ENCODE measurements at regions of chr7 and their contacts with region 1.

Region 1: DNA sequence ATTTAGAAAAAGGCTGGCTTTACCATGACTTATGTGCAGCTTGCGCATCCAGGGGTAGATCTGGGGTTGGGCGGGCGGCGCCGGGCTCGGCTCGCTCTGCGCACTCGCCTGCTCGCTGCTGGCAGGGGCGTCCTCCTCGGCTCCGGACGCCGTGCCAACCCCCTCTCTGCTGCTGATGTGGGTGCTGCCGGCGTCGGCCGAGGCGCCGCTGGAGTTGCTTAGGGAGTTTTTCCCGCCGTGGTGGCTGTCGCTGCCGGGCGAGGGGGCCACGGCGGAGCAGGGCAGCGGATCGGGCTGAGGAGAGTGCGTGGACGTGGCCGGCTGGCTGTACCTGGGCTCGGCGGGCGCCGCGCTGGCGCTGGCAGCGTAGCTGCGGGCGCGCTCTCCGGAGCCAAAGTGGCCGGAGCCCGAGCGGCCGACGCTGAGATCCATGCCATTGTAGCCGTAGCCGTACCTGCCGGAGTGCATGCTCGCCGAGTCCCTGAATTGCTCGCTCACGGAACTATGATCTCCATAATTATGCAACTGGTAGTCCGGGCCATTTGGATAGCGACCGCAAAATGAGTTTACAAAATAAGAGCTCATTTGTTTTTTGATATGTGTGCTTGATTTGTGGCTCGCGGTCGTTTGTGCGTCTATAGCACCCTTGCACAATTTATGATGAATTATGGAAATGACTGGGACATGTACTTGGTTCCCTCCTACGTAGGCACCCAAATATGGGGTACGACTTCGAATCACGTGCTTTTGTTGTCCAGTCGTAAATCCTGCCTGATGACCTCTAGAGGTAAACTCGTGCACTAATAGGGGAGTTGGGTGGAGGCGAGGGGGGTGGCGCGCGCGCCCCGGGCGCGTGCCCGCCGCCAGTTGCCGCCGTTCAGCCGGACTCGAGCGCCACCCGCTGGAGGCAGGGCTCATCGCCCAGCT is at the start of gene HOXA5:
- DNase-seq: peak; percentile 99
- H3K4me3 ChIP-seq: peak within 1 kb of the TSS; percentile 70 to 81 (median 74)
- H3K27ac ChIP-seq: peak within 1 kb of the TSS; percentile 89
- H3K4me1 ChIP-seq: peaks cover 60% of the 10 kb centered on the region
- H3K27me3 ChIP-seq: no peaks in the 10 kb centered on the region
- CTCF ChIP-seq: peak; percentile 75 to 91
- total RNA-seq, gene HOXA5: 9.1 to 11.0 TPM

Region 2: DNA sequence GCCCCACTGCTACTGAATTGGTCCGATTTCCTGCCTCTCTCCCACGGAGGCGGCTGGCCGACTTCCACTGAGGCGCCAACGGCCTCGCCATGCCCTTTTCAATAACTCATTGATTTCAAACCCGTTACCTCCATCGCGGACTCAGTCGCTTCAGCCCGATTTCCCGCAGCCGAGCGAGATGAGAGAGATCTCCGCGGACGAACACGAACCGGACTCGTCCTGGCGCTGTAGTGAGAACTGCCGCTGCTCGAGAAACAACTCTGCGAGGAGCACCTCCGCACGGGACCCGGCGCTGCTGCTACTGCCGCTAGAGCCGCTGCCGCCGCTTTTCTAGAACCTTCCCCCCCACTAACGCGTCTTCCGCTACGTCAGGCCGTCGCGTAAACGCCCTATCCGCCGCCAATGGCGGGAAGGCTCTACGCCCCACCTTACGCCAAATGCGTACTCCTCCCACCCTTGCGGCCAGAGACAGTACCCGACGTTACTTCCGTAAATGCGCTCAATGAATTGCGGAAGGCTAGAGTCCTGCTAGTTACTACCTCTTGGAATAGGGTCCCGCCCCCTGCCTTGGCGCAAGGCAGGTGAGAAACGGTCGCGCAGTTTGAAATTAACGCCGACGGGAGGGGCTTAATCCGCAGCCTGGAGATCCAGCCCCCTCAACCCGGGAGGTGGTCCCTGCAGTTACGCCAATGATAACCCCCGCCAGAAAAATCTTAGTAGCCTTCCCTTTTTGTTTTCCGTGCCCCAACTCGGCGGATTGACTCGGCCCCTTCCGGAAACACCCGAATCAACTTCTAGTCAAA is 942.6 kb before region 1 on chr7 and contains the start of gene HNRNPA2B1:
- CTCF ChIA-PET with region 1: no interaction called
- dilution Hi-C with region 1: no loop called
- in situ Hi-C with region 1: no loop called
- intact Hi-C with region 1: loop called (anchors 2 kb)
- DNase-seq: peak; percentile 97
- H3K4me3 ChIP-seq: peak within 1 kb of the TSS; percentile 99 to 100 (median 100)
- H3K27ac ChIP-seq: peak within 1 kb of the TSS; percentile 93
- H3K4me1 ChIP-seq: peaks cover 28% of the 10 kb centered on the region
- H3K27me3 ChIP-seq: no peaks in the 10 kb centered on the region
- CTCF ChIP-seq: no peak
- total RNA-seq, gene HNRNPA2B1: 62.0 to 506 TPM

Region 3: GRCh38 chr7:26500749-26501352 is 642.4 kb before region 1 on chr7:
- CTCF ChIA-PET with region 1: no interaction called
- dilution Hi-C with region 1: no loop called
- in situ Hi-C with region 1: no loop called
- intact Hi-C with region 1: loop called (anchors 5 kb)
- DNase-seq: peak; percentile 27
- H3K4me3 ChIP-seq: no peak overlapping the region
- H3K27ac ChIP-seq: no peak overlapping the region
- H3K4me1 ChIP-seq: no peaks in the 10 kb centered on the region
- H3K27me3 ChIP-seq: no peaks in the 10 kb centered on the region
- CTCF ChIP-seq: peak; percentile 37 to 65

Region 4: DNA sequence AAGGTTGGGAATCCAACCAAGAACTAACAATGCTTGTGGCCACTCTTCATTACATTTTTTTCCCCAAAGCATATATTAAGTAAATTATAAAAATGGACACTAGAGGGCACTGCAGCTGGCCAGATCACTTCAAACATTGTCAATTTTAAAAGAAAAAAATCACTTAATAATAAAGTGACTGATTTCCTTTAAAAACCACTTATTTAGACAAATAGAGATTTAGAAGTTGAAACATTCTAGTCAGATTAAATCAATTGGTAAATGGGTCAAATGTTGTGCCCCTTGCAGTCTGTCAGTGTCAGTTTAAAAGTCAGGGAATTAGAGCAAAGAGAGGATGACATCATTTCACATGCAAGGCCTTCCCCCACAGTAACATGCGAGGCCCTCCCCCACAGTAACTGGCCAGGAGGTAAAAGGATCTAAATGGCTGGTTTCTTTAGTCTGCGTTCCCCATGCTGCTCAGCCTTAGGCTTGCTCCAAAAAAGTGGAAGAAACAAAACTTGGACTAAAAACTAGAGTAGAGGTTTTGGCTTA is 456.8 kb before region 1 on chr7:
- CTCF ChIA-PET with region 1: no interaction called
- dilution Hi-C with region 1: no loop called
- in situ Hi-C with region 1: no loop called
- intact Hi-C with region 1: loop called (anchors 1 kb)
- DNase-seq: peak; percentile 31
- H3K4me3 ChIP-seq: no peak overlapping the region
- H3K27ac ChIP-seq: peak overlapping the region; percentile 4
- H3K4me1 ChIP-seq: peaks cover 19% of the 10 kb centered on the region
- H3K27me3 ChIP-seq: no peaks in the 10 kb centered on the region
- CTCF ChIP-seq: peak; percentile 48 to 53

Region 5: DNA sequence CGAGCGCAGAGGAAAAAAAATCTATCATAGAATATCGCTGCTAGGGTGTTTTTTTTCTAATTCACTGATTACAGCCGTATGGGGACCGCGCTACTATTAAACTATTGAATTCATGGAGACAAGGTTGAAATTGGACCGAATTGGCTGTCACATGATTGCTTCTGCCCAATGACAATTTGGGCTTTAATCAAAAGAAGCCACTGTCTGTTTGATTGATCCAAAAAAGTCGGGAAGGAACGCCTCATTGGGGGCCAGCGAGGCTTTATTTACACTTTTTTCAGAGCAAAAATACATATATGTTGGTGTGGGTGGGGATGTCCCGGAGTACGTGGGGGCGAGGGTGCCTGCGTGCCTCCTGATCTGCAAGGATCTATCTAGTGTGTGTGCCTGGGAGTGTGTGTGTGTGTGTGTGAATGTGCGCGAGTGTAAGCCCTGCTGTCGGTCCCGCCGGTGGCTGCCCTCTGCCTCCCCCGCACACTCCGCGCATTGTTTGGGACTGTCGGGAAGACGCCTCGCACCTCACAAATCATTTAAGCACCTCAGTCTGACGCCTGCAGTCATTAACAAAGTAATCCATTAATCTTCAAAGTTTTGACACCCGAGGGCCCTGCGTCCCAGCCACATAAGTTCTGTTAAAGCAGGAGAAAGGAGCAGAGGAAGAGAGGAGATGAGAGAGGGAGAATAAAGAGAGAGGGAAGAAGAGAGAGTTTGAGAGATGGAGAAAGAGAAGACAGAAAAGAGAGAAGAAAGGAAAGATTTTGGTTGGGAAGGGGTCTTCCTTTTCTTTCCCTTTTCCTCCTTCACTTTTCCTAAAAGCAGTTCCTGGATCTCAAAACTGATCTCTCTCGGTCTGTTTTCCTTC is 40.5 kb before region 1 on chr7 and contains the start of gene HOXA2:
- CTCF ChIA-PET with region 1: interaction called, 3 read pairs
- dilution Hi-C with region 1: no loop called
- in situ Hi-C with region 1: loop called in 1 of 2 experiments (anchors 5 kb)
- intact Hi-C with region 1: no loop called
- DNase-seq: peak; percentile 80
- H3K4me3 ChIP-seq: peak within 1 kb of the TSS; percentile 50 to 82 (median 57)
- H3K27ac ChIP-seq: peak within 1 kb of the TSS; percentile 97
- H3K4me1 ChIP-seq: peaks cover 62% of the 10 kb centered on the region
- H3K27me3 ChIP-seq: no peaks in the 10 kb centered on the region
- CTCF ChIP-seq: no peak
- total RNA-seq, gene HOXA2: 0.50 to 1.5 TPM

Region 6: DNA sequence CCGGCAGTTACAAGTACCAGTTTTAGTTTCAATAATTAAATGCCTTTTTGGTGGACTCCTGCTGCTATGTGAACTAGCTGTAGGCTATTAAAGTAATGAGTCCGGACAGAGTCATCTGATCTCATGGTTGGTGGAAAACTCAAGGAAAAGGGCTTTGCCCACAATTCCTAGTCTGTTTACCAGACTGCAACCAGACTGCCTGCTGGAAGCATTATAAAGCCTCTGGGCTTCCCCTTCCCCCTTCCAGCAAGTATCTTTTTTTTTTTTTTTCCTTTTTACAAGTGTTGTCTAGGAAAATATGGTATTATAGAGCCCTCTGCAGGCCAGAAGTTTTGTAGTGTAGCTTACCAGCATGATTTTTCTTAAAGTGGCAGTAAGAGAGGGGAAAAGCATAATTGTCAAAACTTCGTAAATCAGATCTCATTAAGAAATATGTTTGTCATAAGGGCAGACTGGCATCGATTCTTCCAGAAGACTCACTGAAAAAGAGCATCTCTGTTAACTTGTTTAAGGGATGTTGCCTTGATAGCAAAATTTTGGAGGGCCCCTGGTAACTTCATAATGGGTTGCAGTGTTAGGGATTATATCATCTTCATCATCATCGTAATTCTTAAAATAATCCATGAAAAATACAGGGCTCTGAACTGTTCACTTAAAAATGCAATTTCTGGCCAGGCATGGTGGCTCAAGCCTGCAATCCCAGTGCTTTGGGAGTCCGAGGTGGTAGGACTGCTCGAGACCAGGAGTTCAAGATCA is 778.0 kb after region 1 on chr7:
- CTCF ChIA-PET with region 1: no interaction called
- dilution Hi-C with region 1: no loop called
- in situ Hi-C with region 1: no loop called
- intact Hi-C with region 1: no loop called
- DNase-seq: peak; percentile 56
- H3K4me3 ChIP-seq: no peak overlapping the region
- H3K27ac ChIP-seq: no peak overlapping the region
- H3K4me1 ChIP-seq: peaks cover 23% of the 10 kb centered on the region
- H3K27me3 ChIP-seq: no peaks in the 10 kb centered on the region
- CTCF ChIP-seq: peak; percentile 32 to 55